A549 (cell line): ENCODE measurements at regions of chr12 and their contacts with region 1.

Region 1: DNA sequence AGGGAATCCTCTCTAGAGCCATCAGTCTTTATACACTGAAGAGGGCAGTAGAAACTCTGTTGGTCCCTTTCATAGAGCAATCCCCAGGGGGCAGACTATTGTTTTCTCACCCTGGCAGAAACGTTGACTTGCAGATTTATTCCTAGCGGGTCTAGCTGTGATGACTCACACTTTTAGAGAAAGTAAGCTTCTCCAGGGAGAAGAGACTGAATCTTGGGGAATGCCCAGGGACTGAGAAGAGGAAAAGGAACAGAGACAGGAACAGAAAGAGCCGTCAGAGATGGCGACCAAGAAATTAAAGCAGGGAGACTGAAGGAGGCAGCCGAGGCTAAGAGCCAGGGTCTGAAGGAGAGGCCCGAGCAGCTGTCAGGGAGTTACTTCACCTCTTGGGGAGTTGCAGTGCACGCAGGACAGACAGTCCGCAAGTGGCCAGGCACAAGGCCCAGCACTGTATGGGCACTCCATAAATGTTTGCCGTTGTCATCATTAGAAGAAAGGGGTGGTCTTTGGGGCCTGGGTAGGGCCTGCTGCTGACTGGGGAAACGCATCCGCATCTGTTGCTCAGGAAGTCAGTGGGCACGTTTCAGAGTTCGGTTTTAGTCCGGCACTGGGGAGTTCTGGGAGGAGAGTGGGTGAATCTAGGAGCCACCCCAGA is 13.0 kb downstream of the PLEKHG6 start:
- DNase-seq: peak; percentile 88 to 92
- ATAC-seq: peak; percentile 56 to 67
- H3K4me3 ChIP-seq: peak overlapping the region; percentile 11; the same call in 1 of the 3 replicates
- H3K27ac ChIP-seq: peak overlapping the region; percentile 81 to 95
- H3K4me1 ChIP-seq: peaks cover 93% of the 10 kb centered on the region
- CTCF ChIP-seq: peak; percentile 72
- EP300 ChIP-seq: no peak
- POLR2A ChIP-seq: no peak
- RAD21 ChIP-seq: peak; percentile 61 to 75; a peak in 4 of 5 replicates

Region 2: GRCh38 chr12:6262211-6262610 is 61.3 kb before region 1 on chr12:
- CTCF ChIA-PET with region 1: no interaction called
- POLR2A ChIA-PET with region 1: no interaction called
- DNase-seq: no peak
- ATAC-seq: no peak
- H3K4me3 ChIP-seq: no peak overlapping the region
- H3K27ac ChIP-seq: no peak overlapping the region
- H3K4me1 ChIP-seq: peaks cover 6% of the 10 kb centered on the region
- CTCF ChIP-seq: no peak
- EP300 ChIP-seq: no peak
- POLR2A ChIP-seq: no peak
- RAD21 ChIP-seq: no peak

Region 3: DNA sequence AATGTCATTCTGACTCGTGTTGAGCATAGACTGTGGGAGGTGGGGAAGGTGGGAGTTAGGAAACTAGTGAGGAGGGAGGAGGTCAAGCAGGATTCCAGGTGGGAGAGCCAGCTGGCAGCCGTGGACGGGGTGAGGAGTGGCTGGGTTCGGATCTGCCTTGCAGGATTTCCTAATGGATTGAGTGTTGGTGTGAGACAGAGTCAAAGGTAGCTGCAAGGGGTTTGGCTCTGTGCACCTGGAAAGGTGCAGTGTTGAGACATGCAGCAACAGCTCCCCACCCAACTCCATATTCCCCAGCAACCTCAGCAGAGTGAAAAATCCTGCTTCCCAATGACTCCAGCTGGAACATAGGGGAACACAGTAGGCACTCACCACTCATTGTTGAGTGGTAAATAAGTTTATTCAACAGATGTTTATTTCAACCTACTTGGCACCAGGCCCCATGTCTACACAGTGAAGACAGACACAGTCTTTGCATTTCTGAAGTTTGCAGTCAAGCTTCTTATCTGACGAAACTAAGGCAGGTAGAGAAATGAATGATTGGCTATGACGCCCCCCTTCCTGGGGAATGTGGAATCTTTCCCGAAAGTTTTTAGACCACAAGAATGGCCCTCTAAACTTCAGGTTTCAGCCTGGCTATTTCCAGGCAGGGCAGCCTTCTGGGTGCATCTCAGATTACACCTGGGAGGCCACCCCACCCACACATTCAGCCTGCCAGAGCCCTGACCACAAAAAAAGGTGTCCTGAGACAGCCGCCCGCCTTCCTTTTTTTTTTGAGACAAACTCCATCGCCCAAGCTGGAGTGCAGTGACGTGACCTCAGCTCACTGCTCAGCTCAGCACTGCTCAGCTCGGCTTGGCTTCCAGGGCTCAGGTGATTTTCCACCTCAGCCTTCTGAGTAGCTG is 50.9 kb before region 1 on chr12:
- CTCF ChIA-PET with region 1: no interaction called
- POLR2A ChIA-PET with region 1: no interaction called
- DNase-seq: no peak
- ATAC-seq: no peak
- H3K4me3 ChIP-seq: no peak overlapping the region
- H3K27ac ChIP-seq: no peak overlapping the region
- H3K4me1 ChIP-seq: peaks cover 7% of the 10 kb centered on the region
- CTCF ChIP-seq: no peak
- EP300 ChIP-seq: no peak
- POLR2A ChIP-seq: no peak
- RAD21 ChIP-seq: no peak

Region 4: DNA sequence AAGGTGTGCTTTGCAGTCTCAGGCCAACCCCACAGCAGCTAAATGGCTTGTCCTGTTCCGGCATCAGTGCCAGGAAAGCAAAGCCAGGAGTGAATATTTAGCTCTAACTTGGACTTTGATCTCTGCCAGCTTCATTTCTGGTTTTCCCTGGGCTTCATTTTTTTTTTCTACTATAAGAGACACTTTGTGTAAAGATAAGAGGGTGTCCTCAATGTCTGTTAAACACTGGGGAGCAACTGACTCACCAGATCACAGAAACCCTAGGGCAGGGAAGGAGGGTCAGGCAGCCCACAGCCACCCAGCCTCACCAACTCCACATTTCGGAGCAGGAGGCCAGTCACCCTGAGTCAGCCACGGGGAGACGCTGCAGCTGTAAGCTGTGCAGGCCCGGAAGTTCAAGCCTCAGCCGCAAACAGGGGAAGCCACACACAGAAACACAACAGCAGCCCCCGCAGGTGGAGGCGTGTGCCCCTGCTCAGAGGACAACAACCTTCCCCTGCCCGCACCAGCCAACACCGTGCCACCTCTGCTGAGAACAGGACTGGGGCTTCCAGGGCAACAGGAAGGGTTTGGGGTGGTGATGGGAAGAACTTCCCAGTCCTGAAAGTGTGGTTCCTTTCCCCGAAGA is 12.1 kb after region 1 on chr12:
- CTCF ChIA-PET with region 1: interaction called, 51 read pairs
- POLR2A ChIA-PET with region 1: interaction called, 35 read pairs
- DNase-seq: peak; percentile 86 to 88
- ATAC-seq: peak; percentile 40 to 43
- H3K4me3 ChIP-seq: peak overlapping the region; percentile 26
- H3K27ac ChIP-seq: peak overlapping the region; percentile 95 to 98
- H3K4me1 ChIP-seq: peaks cover 80% of the 10 kb centered on the region
- CTCF ChIP-seq: peak; percentile 47
- EP300 ChIP-seq: no peak
- POLR2A ChIP-seq: peak; percentile 26
- RAD21 ChIP-seq: peak; percentile 58 to 66; a peak in 4 of 5 replicates

Region 5: DNA sequence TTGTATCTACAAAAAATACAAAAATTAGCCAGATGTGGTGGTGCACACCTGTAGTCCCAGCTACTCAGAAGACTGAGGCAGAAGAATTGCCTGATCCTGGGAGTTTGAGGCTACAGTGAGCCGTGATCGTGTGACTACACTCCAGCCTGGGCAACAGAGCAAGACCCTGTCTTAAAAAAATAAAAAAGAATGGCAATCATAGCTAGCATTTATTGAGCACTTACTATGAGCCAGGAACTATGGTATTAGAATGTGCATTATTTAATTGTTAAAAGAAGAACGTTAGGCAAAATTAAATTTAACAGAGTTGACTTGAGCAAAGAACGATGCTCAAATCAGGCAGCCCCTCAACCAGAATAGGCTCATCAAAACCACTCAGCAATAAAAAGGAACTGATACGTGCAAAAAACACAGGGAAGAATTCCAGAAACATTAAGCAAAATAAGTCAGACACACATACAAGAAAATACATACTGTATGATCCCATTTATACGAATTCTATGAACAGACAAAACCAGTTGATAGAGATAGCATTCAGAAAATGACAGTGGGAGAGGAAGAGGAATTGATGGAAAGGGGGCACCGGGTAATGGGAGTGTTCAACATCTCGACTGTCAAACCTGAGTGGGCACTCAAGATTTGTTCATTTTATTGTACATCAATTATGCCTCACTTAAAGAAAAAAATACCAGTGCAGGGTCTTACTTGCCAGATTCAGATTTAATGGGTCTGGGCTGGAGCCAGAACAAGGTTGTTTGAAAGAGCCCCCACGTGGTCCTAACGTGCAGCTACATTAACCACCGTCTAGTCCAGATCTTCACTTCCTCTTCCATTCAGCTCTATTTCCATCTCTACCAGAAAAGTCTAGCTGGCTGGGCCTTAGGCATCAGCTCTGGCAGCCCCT is 43.9 kb after region 1 on chr12:
- CTCF ChIA-PET with region 1: interaction called, 705 read pairs
- POLR2A ChIA-PET with region 1: interaction called, 10 read pairs
- DNase-seq: peak in 1 of 2 experiments; percentile 77
- ATAC-seq: no peak
- H3K4me3 ChIP-seq: no peak overlapping the region
- H3K27ac ChIP-seq: peak overlapping the region; percentile 97 to 99
- H3K4me1 ChIP-seq: peaks cover 64% of the 10 kb centered on the region
- CTCF ChIP-seq: no peak; the same call in 1 of the 3 replicates
- EP300 ChIP-seq: no peak
- POLR2A ChIP-seq: no peak
- RAD21 ChIP-seq: peak; percentile 48 to 57; a peak in 4 of 5 replicates

Region 6: GRCh38 chr12:6423267-6424007 is 100.0 kb after region 1 on chr12:
- CTCF ChIA-PET with region 1: interaction called, 15 read pairs
- POLR2A ChIA-PET with region 1: interaction called, 4 read pairs
- DNase-seq: peak; percentile 87 to 93
- ATAC-seq: peak; percentile 91 to 95
- H3K4me3 ChIP-seq: no peak overlapping the region
- H3K27ac ChIP-seq: peak overlapping the region; percentile 42 to 76; a peak in 4 of 6 replicates
- H3K4me1 ChIP-seq: peaks cover 26% of the 10 kb centered on the region
- CTCF ChIP-seq: peak; percentile 95
- EP300 ChIP-seq: no peak
- POLR2A ChIP-seq: no peak
- RAD21 ChIP-seq: peak; percentile 98

Region 7: DNA sequence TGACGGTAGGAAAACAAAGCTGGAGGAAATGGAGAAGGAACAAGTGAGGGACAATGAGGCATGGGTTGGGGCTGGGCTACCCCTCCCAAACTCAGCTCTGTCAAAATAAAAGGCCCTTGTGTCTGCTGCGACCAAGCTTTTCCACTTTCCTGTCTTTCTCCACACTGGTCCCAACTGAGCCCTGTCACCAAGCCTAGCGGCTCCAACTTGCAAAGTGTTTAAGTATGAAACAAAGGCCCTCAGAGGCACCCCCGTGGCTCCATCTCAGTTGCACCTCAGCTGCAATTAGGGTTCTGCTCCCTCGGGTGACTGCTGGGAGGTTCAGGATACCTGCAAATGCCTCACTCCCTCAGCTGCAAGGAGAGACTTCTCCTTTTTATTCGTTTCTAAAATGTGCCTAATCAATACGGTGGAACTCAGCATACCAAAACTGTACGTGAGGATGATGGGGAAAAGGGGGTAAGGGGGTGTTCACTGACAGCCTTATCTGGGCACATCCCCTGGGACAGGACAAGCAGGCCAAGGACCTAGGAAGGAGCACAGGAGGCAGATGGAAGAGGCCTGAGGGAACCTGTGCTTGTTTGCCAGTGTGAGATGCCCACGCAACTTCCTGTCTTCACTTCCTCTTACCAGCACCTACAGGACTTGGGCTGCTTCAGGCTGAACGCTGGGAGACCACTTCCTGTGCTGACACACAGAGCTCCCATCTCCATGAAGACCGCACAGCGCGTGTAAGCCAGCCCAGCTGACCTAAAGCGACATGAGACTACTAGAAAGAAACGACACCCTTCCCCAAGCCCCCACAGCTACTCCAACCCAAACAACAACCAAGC is 138.2 kb after region 1 on chr12:
- CTCF ChIA-PET with region 1: interaction called, 73 read pairs
- POLR2A ChIA-PET with region 1: interaction called, 10 read pairs
- DNase-seq: no peak
- ATAC-seq: no peak
- H3K4me3 ChIP-seq: no peak overlapping the region
- H3K27ac ChIP-seq: no peak overlapping the region
- H3K4me1 ChIP-seq: 0 out of 3 replicates have a peak, but pooled peaks cover 5% of the 10 kb centered on the region
- CTCF ChIP-seq: no peak
- EP300 ChIP-seq: no peak
- POLR2A ChIP-seq: no peak
- RAD21 ChIP-seq: no peak